ENCODE measurements at regions of chr10 and their contacts with region 1.

Region 1: GRCh38 chr10:5623081-5623748 is 43.2 kb downstream of the ASB13 start:
- DNase-seq: peak; percentile 51 to 77 (median 54)
- H3K4me3 ChIP-seq: no peak overlapping the region
- H3K4me3 Mint-ChIP-seq: no peak overlapping the region
- H3K27ac ChIP-seq: no peak overlapping the region
- H3K27ac Mint-ChIP-seq: no peak overlapping the region
- H3K4me1 ChIP-seq: no peaks in the 10 kb centered on the region
- H3K4me1 Mint-ChIP-seq: peaks cover 0 to 3% (median 3%) of the 10 kb centered on the region in 3 donors
- H3K27me3 ChIP-seq: no peaks in the 10 kb centered on the region
- H3K27me3 Mint-ChIP-seq: peaks cover 1 to 7% of the 10 kb centered on the region in 2 donors

Region 2: DNA sequence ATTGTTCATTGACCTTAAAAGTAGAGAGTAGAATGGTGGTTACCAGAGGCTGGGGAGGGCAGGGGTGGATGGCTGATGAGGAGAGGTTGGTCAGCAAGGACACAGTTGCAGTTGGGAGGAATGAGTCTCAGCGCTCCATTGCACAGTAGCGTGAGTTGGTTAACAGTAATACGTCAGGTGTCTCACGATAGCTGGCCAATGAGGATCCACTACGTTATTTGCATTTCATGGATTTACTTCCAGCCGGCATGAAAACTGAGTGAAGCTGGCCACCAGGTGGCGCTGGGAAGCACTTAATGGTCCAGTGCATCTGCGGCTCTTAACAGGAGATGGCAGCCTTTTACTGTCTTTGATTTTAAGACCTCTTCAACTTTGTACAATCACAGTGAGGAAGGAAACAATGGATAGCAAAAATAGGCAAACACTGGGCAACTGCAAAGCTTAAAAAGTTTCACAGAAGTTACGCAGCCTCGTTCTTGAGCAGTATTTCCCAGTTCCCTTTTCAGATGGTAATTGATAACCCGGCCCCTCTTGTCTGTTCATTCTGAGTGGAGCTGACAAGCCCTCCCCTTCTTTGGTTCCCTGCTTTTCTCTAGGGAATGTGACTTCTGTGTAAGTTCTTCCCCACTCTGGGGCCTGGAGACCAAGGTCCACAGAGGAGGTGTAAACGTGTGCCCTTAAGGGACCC is 773.5 kb before region 1 on chr10:
- CTCF ChIA-PET with region 1: interaction called, 19 read pairs
- POLR2A ChIA-PET with region 1: no interaction called
- DNase-seq: peak; percentile 61 to 82 (median 70)
- H3K4me3 ChIP-seq: no peak overlapping the region
- H3K4me3 Mint-ChIP-seq: peak overlapping the region in 1 of 7 donors; percentile 45
- H3K27ac ChIP-seq: no peak overlapping the region
- H3K27ac Mint-ChIP-seq: peak overlapping the region in 2 of 8 donors; percentile 38 to 78
- H3K4me1 ChIP-seq: no peaks in the 10 kb centered on the region
- H3K4me1 Mint-ChIP-seq: peaks cover 5 to 7% (median 5%) of the 10 kb centered on the region in 3 donors
- H3K27me3 ChIP-seq: no peaks in the 10 kb centered on the region
- H3K27me3 Mint-ChIP-seq: peaks cover 2 to 9% of the 10 kb centered on the region in 2 donors

Region 3: GRCh38 chr10:5385224-5385623 is 238.0 kb before region 1 on chr10:
- CTCF ChIA-PET with region 1: no interaction called
- POLR2A ChIA-PET with region 1: no interaction called
- DNase-seq: no peak
- H3K4me3 ChIP-seq: no peak overlapping the region
- H3K4me3 Mint-ChIP-seq: no peak overlapping the region
- H3K27ac ChIP-seq: no peak overlapping the region
- H3K27ac Mint-ChIP-seq: peak overlapping the region in 1 of 8 donors; percentile 19
- H3K4me1 ChIP-seq: no peaks in the 10 kb centered on the region
- H3K4me1 Mint-ChIP-seq: no peaks in the 10 kb centered on the region
- H3K27me3 ChIP-seq: no peaks in the 10 kb centered on the region
- H3K27me3 Mint-ChIP-seq: peaks cover 2 to 25% of the 10 kb centered on the region in 2 donors

Region 4: GRCh38 chr10:5434017-5434753 is 189.0 kb before region 1 on chr10:
- CTCF ChIA-PET with region 1: interaction called, 122 read pairs
- POLR2A ChIA-PET with region 1: no interaction called
- DNase-seq: peak in 2 of 5 donors; percentile 29 to 31
- H3K4me3 ChIP-seq: no peak overlapping the region
- H3K4me3 Mint-ChIP-seq: peak overlapping the region in 3 of 7 donors; percentile 25 to 48 (median 34)
- H3K27ac ChIP-seq: no peak overlapping the region
- H3K27ac Mint-ChIP-seq: peak overlapping the region in 5 of 8 donors; percentile 2 to 74 (median 40)
- H3K4me1 ChIP-seq: peaks cover 5% of the 10 kb centered on the region
- H3K4me1 Mint-ChIP-seq: peaks cover 6 to 12% (median 11%) of the 10 kb centered on the region in 3 donors
- H3K27me3 ChIP-seq: no peaks in the 10 kb centered on the region
- H3K27me3 Mint-ChIP-seq: peaks cover 0 to 3% of the 10 kb centered on the region in 2 donors

Region 5: GRCh38 chr10:5446390-5446926 is 176.8 kb before region 1 on chr10:
- CTCF ChIA-PET with region 1: interaction called, 122 read pairs
- POLR2A ChIA-PET with region 1: no interaction called
- DNase-seq: peak in 4 of 5 donors; percentile 8 to 76 (median 39)
- H3K4me3 ChIP-seq: peak overlapping the region; percentile 63
- H3K4me3 Mint-ChIP-seq: peak overlapping the region in 6 of 7 donors; percentile 20 to 73 (median 62)
- H3K27ac ChIP-seq: peak overlapping the region; percentile 43
- H3K27ac Mint-ChIP-seq: peak overlapping the region in 2 of 8 donors; percentile 15 to 48
- H3K4me1 ChIP-seq: peaks cover 19% of the 10 kb centered on the region
- H3K4me1 Mint-ChIP-seq: peaks cover 22 to 32% (median 30%) of the 10 kb centered on the region in 3 donors
- H3K27me3 ChIP-seq: no peaks in the 10 kb centered on the region
- H3K27me3 Mint-ChIP-seq: no peaks in the 10 kb centered on the region

Region 6: DNA sequence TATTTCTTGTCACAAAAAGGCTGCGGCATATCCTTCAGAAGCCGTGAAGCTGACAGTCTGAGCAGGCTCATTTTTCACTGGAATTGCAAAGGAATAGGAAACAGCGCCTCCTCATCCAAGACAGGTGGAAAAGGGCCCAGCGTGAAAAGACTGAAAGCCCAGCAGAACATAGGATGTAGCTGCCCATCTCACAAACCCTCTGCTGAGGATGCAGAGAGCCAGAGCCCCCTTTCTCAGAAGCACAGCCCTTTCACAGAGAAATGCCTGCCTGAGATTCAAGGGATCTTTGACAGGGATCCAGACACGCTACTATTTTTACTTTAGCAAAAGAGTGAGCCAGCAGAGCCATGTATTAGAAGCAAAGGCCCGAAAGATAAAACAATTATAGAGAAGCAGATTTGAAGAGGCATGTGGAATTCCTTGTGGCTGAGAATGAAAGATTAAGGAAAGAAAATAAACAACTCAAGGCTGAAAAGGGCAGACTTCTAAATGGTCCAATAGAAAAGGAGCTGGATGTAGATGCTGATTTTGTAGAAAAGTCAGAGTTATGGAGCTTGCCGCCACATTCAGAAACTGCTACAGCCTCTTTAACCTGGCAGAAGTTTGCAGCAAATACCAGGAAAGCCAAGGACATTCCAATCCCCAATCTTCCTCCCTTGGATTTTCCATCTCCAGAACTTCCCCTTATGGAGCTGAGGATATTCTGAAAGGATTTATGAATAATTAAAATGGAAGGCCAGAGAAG is 153.1 kb after region 1 on chr10:
- CTCF ChIA-PET with region 1: no interaction called
- POLR2A ChIA-PET with region 1: no interaction called
- DNase-seq: no peak
- H3K4me3 ChIP-seq: peak overlapping the region; percentile 18
- H3K4me3 Mint-ChIP-seq: peak overlapping the region in 6 of 7 donors; percentile 18 to 79 (median 68)
- H3K27ac ChIP-seq: peak overlapping the region; percentile 11
- H3K27ac Mint-ChIP-seq: peak overlapping the region; percentile 78 to 96 (median 88)
- H3K4me1 ChIP-seq: peaks cover 23% of the 10 kb centered on the region
- H3K4me1 Mint-ChIP-seq: peaks cover 55 to 82% (median 71%) of the 10 kb centered on the region in 3 donors
- H3K27me3 ChIP-seq: no peaks in the 10 kb centered on the region
- H3K27me3 Mint-ChIP-seq: no peaks in the 10 kb centered on the region